ENCODE measurements at regions of chr11 and their contacts with region 1.

Region 1: GRCh38 chr11:65919146-65920033 is at the start of gene DRAP1:
- DNase-seq: peak; percentile 99 to 100
- ATAC-seq: peak; percentile 83 to 88 (median 86)
- H3K4me3 ChIP-seq: peak within 1 kb of the TSS; percentile 100
- H3K27ac ChIP-seq: peak within 1 kb of the TSS; percentile 99
- H3K4me1 ChIP-seq: peaks cover 43% of the 10 kb centered on the region
- H3K27me3 ChIP-seq: no peaks in the 10 kb centered on the region
- CTCF ChIP-seq: no peak
- total RNA-seq, gene DRAP1: 74.5 to 138 (median 91.3) TPM

Region 2: DNA sequence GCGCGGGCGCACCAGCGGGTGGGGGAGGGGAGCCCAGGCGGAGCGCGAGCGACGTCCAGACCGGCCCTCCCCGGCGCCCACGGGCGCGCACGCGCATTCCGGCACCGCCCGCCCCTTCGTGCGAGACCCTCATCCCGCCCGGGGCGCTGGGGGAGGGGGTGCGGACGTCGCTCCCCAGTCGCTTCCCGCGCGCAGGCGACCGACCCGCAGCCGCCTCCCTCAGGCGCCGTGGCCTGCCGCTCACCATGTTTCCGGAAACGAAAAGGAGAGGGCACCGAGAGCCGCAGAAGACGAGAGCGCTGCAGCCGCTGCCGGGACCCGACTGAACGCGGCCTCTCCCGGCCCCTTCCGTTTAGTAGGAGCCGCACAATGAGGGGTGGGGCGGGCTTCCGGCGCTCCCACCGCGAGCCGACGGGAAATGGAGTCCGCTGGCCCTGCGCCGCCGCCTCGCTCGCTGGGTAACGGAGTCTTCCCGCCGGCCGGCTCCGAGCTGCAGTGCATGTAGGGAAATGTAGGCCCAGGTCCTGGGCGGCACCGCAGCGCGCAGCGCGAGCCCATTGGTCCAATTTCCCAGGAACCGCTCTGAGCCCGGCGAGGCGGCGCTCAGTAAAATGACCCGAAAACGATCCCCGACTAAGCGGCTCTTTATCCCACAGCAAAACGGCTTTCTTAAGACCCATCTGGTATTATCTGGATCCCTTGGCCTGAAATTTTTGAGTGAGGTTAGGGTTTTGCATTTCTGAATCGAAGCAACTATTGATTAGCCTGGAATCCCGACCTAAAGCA is 61.3 kb before region 1 on chr11 and contains the start of gene CFL1:
- intact Hi-C with region 1: loop called in 1 of 2 experiments (anchors 1 kb)
- DNase-seq: peak; percentile 99
- ATAC-seq: peak; percentile 76 to 79 (median 76)
- H3K4me3 ChIP-seq: peak within 1 kb of the TSS; percentile 100
- H3K27ac ChIP-seq: peak within 1 kb of the TSS; percentile 99
- H3K4me1 ChIP-seq: peaks cover 21% of the 10 kb centered on the region
- H3K27me3 ChIP-seq: no peaks in the 10 kb centered on the region
- CTCF ChIP-seq: no peak
- total RNA-seq, gene CFL1: 175 to 388 (median 238) TPM

Region 3: DNA sequence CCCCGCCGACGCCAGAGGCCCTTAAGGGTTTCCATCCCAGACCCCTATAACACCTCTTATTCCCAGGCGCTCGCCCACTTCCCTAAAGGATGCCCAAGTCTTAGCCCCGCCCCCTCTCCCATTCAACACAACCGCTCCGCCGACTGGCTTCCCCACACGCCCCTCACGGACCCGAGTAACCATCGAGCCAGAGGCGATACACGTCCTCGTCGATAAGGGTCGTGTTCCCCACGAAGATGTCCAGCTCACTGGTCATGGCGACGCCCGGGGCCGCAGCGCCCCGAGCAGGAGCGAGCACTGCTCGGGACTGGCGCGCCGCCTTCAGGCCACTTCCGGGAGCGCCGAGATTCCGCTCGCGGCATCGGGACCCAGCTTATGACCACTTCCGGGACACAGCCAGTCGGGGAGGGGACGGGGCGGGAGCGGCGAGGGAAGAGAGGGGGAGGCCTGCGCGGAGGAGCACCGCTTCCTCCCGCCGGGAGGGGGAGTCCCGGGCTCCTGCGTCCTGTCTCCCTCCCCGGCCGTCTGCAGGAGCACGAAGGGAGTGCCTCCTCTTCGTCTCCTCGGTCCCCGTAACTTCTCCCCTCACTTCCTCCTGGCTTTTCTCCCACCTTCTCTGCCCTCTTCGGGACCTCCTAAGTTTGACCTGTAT is 31.1 kb before region 1 on chr11 and contains the start of gene FIBP:
- intact Hi-C with region 1: loop called (anchors 1 to 2 kb)
- DNase-seq: peak; percentile 98 to 99
- ATAC-seq: peak; percentile 82 to 86 (median 84)
- H3K4me3 ChIP-seq: peak within 1 kb of the TSS; percentile 75
- H3K27ac ChIP-seq: peak within 1 kb of the TSS; percentile 97
- H3K4me1 ChIP-seq: peaks cover 26% of the 10 kb centered on the region
- H3K27me3 ChIP-seq: no peaks in the 10 kb centered on the region
- CTCF ChIP-seq: peak; percentile 73
- total RNA-seq, gene FIBP: 27.7 to 42.5 (median 37.0) TPM

Region 4: DNA sequence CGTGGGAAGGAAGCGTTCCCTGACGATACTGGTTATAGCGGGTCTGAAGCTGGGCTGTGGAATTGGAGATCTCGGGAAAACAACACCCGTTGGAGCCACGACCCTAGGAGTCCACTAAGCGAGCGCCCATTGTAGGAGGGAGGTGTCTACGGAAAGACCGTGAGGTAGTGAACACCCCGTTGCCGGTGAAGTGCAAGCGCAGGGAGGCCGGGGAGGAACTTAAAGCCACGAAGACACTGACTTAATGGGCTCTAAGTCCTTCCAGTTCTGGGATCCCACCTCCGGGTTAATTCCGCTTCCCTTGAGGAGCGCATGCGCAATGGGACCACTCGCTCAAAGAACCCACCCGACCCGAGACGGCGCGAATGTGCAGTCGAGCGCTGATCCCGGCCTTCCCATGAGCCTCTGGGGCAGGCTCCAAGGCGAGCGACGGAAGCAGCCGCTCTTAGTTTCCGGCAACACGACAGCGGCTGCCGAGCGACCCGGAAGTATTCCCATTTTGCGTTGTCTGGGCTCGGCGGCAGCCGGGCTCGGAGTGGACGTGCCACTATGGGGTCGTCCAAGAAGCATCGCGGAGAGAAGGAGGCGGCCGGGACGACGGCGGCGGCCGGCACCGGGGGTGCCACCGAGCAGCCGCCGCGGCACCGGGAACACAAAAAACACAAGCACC is 42.0 kb after region 1 on chr11 and contains the start of gene SART1:
- intact Hi-C with region 1: loop called (anchors 2 kb)
- DNase-seq: peak; percentile 98 to 99
- ATAC-seq: peak; percentile 97 to 99 (median 98)
- H3K4me3 ChIP-seq: peak within 1 kb of the TSS; percentile 100
- H3K27ac ChIP-seq: peak within 1 kb of the TSS; percentile 91
- H3K4me1 ChIP-seq: peaks cover 15% of the 10 kb centered on the region
- H3K27me3 ChIP-seq: no peaks in the 10 kb centered on the region
- CTCF ChIP-seq: no peak
- total RNA-seq, gene SART1: 36.3 to 55.4 (median 49.3) TPM

Region 5: GRCh38 chr11:65967444-65967849 is 48.1 kb after region 1 on chr11:
- intact Hi-C with region 1: loop called in 1 of 2 experiments (anchors 2 kb)
- DNase-seq: no peak
- ATAC-seq: no peak
- H3K4me3 ChIP-seq: no peak overlapping the region
- H3K27ac ChIP-seq: no peak overlapping the region
- H3K4me1 ChIP-seq: peaks cover 32% of the 10 kb centered on the region
- H3K27me3 ChIP-seq: no peaks in the 10 kb centered on the region
- CTCF ChIP-seq: no peak

Measured in psoas muscle (tissue), 8 donors.